Activated naive CD4-positive, alpha-beta T cell treated with anti-CD3 and anti-CD28 coated beads, Interleukin-2, amount 10 ng/mL, durations not matched to agents 7 days and 5 days (primary cell): ENCODE measurements at regions of chr19 and their contacts with region 1.

Region 1: DNA sequence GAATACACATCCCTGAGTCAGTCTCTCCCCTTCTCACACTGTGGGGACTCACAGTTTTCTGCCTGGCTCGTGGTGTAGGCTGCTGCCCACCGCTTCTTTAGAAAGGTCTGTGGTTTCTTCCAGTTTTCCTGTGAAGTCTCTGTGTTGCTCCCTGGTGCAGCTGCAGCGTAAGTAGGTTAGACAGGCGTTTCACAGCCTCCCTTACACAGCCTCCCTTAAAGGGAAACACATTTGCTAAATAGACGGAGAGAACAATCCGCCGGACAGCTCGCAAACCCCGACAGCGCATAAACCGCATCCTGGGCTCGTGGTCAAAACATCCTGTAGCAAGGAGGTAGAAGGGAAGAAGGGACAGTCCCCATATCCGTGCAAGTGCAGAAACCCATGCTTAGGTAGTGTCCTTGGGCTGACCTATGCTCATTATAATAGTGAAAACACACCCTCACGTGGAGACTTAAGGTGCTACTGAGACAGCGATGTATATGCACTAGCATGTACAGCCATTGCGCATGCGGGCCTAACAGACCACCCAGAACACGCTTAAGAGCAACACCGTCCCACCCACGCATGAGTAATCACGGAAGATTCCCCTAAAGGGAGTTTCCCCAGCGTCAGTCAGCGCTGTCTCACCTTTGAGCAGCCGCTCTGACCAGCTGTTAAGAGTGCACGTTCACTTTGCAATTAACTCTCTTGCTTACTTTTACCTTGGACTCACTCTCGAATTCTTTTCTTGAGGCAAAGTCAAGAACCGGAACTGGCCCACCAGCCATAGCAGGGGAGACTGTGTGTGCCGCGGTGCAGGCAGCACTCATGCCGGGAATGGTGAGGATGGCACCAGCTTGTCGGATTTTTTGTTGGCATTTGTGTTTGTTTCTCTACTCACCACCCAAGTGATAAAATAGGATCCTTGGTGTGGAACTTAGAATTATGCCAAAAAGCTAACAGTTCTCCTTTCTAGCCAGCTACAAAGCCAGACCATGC is 16.6 kb downstream of the SIGLEC8 start:
- DNase-seq: peak; percentile 91
- H3K4me3 Mint-ChIP-seq: peak overlapping the region; percentile 70
- H3K27ac Mint-ChIP-seq: peak overlapping the region; percentile 62
- H3K4me1 Mint-ChIP-seq: peaks cover 46% of the 10 kb centered on the region
- H3K27me3 Mint-ChIP-seq: peaks cover 66% of the 10 kb centered on the region

Region 2: DNA sequence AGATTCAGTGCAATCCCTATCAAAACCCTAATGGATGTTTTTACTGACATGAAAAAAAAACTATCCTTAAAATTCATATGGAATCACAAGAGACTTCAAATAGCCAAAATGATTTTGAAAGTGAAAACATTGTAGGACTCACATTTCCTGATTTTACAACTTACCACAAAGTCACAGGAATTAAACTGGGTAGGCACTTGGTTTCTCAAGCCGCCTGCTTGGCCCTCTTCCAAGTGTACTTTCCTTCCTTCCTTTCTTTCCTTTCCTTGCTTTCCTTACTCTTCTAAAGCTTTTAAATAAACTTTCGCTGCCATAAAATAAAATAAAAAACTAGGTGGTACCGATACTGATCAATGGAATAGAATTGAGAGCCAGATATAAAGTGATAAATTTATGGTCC is 237.8 kb before region 1 on chr19:
- CTCF ChIA-PET with region 1: no interaction called
- DNase-seq: no peak
- H3K4me3 Mint-ChIP-seq: no peak overlapping the region
- H3K27ac Mint-ChIP-seq: no peak overlapping the region
- H3K4me1 Mint-ChIP-seq: peaks cover 6% of the 10 kb centered on the region
- H3K27me3 Mint-ChIP-seq: peaks cover 49% of the 10 kb centered on the region

Region 3: GRCh38 chr19:51338563-51339312 is 103.0 kb before region 1 on chr19:
- CTCF ChIA-PET with region 1: interaction called, 27 read pairs
- DNase-seq: peak; percentile 91
- H3K4me3 Mint-ChIP-seq: peak overlapping the region; percentile 83
- H3K27ac Mint-ChIP-seq: no peak overlapping the region
- H3K4me1 Mint-ChIP-seq: peaks cover 16% of the 10 kb centered on the region
- H3K27me3 Mint-ChIP-seq: peaks cover 55% of the 10 kb centered on the region

Region 4: GRCh38 chr19:51386882-51387520 is 54.7 kb before region 1 on chr19:
- CTCF ChIA-PET with region 1: no interaction called
- DNase-seq: no peak
- H3K4me3 Mint-ChIP-seq: no peak overlapping the region
- H3K27ac Mint-ChIP-seq: no peak overlapping the region
- H3K4me1 Mint-ChIP-seq: peaks cover 14% of the 10 kb centered on the region
- H3K27me3 Mint-ChIP-seq: peaks cover 20% of the 10 kb centered on the region

Region 5: GRCh38 chr19:51417107-51417809 is 24.4 kb before region 1 on chr19 and contains the start of gene SIGLEC10:
- CTCF ChIA-PET with region 1: interaction called, 11 read pairs
- DNase-seq: no peak
- H3K4me3 Mint-ChIP-seq: no peak within 1 kb of the TSS
- H3K27ac Mint-ChIP-seq: no peak within 1 kb of the TSS
- H3K4me1 Mint-ChIP-seq: peaks cover 6% of the 10 kb centered on the region
- H3K27me3 Mint-ChIP-seq: peaks cover 61% of the 10 kb centered on the region

Region 6: GRCh38 chr19:51493776-51494175 is 52.1 kb after region 1 on chr19:
- CTCF ChIA-PET with region 1: no interaction called
- DNase-seq: no peak
- H3K4me3 Mint-ChIP-seq: no peak overlapping the region
- H3K27ac Mint-ChIP-seq: no peak overlapping the region
- H3K4me1 Mint-ChIP-seq: no peaks in the 10 kb centered on the region
- H3K27me3 Mint-ChIP-seq: peaks cover 18% of the 10 kb centered on the region